Activated B cell treated with CpG ODN at 0.5 μM for 24 hours (primary cell): ENCODE measurements at regions of chr7 and their contacts with region 1.

Region 1: DNA sequence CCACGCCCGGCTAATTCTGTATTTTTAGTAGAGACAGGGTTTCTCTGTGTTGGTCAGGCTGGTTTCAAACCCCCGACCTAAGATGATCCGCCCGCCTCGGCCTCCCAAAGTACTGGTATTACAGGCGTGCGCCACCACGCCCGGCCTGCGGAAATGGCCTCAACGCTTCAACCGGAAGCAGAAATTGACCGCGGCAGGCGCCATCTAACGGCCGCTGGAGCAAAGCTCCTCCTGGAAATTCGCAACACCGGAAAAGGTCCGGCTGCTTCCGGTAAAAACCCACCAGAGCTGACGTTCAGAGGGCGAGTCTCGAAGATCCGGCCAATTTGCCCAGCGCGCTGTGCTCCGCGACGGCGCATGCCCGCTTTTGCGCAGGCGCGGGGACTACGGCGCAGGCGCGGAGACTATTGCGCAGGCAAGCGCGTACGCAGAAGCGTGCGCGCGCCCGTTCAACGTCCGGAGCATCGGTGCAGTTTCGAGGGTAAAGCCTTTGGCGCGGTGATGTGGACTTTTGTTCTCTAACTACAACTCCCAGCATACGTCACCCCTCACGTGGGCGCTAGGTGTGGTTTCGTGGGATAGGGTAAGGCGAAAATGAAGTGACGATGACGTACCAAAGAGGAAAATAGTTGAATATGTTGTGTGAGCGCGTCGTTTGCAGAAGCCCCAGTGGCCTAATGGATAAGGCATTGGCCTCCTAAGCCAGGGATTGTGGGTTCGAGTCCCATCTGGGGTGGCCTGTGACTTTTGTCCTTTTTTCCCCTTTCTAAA is 915 bp upstream of the FMC1 start:
- DNase-seq: peak; percentile 95
- ATAC-seq: peak; percentile 77
- H3K4me3 Mint-ChIP-seq: peak overlapping the region; percentile 96
- H3K27ac Mint-ChIP-seq: peak overlapping the region; percentile 100
- H3K4me1 Mint-ChIP-seq: peaks cover 41% of the 10 kb centered on the region
- H3K27me3 Mint-ChIP-seq: peaks cover 9% of the 10 kb centered on the region
- CTCF ChIP-seq: no peak

Region 2: GRCh38 chr7:138459413-138460175 is 880.6 kb before region 1 on chr7:
- CTCF ChIA-PET with region 1: no interaction called
- POLR2A ChIA-PET with region 1: no interaction called
- intact Hi-C with region 1: loop called (anchors 1 kb)
- DNase-seq: peak; percentile 96
- ATAC-seq: peak; percentile 88
- H3K4me3 Mint-ChIP-seq: peak overlapping the region; percentile 91
- H3K27ac Mint-ChIP-seq: peak overlapping the region; percentile 86
- H3K4me1 Mint-ChIP-seq: peaks cover 22% of the 10 kb centered on the region
- H3K27me3 Mint-ChIP-seq: no peaks in the 10 kb centered on the region
- CTCF ChIP-seq: no peak

Region 3: GRCh38 chr7:139118234-139118804 is 221.9 kb before region 1 on chr7:
- CTCF ChIA-PET with region 1: no interaction called
- POLR2A ChIA-PET with region 1: interaction called, 12 read pairs
- intact Hi-C with region 1: no loop called
- DNase-seq: no peak
- ATAC-seq: peak; percentile 23
- H3K4me3 Mint-ChIP-seq: peak overlapping the region; percentile 68
- H3K27ac Mint-ChIP-seq: peak overlapping the region; percentile 91
- H3K4me1 Mint-ChIP-seq: peaks cover 31% of the 10 kb centered on the region
- H3K27me3 Mint-ChIP-seq: no peaks in the 10 kb centered on the region
- CTCF ChIP-seq: no peak

Region 4: GRCh38 chr7:139230774-139231512 is 109.3 kb before region 1 on chr7 and contains the start of gene UBN2:
- CTCF ChIA-PET with region 1: interaction called, 4 read pairs
- POLR2A ChIA-PET with region 1: interaction called, 5 read pairs
- intact Hi-C with region 1: loop called (anchors 1 kb)
- DNase-seq: peak; percentile 89
- ATAC-seq: peak; percentile 85
- H3K4me3 Mint-ChIP-seq: peak within 1 kb of the TSS; percentile 98
- H3K27ac Mint-ChIP-seq: peak within 1 kb of the TSS; percentile 96
- H3K4me1 Mint-ChIP-seq: peaks cover 20% of the 10 kb centered on the region
- H3K27me3 Mint-ChIP-seq: no peaks in the 10 kb centered on the region
- CTCF ChIP-seq: no peak
- total RNA-seq, gene UBN2: 19.5 and 21.0 TPM in 2 replicates

Region 5: GRCh38 chr7:140062528-140063299 is 722.5 kb after region 1 on chr7 and contains the start of gene PARP12:
- CTCF ChIA-PET with region 1: no interaction called
- POLR2A ChIA-PET with region 1: no interaction called
- intact Hi-C with region 1: loop called (anchors 1 kb)
- DNase-seq: peak; percentile 93
- ATAC-seq: peak; percentile 81
- H3K4me3 Mint-ChIP-seq: peak within 1 kb of the TSS; percentile 97
- H3K27ac Mint-ChIP-seq: peak within 1 kb of the TSS; percentile 98
- H3K4me1 Mint-ChIP-seq: peaks cover 47% of the 10 kb centered on the region
- H3K27me3 Mint-ChIP-seq: no peaks in the 10 kb centered on the region
- CTCF ChIP-seq: no peak
- total RNA-seq, gene PARP12: 104 and 128 TPM in 2 replicates

Region 6: DNA sequence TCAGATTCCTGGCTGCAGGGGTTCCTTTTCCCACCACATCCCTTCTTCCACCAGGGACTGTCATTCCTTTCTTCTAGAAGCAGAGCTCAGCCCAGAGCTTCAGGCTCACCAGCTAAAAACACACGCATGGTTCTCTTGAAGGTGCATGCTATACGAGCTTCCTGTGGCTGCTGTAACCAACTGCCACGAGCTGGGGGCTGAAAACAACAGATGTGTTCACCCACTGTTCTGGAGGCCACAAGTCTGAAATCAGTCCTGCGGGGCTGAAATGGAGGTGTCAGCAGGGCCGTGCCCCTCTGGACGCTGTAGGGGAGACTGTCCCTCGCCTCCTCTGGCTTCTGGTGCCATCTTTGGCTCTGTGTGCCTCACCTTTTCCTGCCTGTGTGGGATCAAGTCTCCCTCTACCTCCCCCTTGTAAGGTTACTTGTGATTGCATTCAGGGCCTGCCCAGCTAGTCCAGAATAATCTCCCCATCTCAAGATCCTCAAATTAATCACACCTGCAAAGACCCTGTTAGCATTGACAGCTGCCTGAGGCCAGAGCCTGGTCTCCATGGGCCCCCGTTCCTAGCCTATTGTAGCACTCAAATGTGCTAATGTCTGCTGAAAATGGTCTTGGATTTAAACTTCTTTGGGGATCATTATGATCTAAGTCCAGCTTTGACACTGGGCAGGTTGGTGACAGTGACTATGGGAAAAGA is 1077.4 kb after region 1 on chr7:
- CTCF ChIA-PET with region 1: no interaction called
- POLR2A ChIA-PET with region 1: no interaction called
- intact Hi-C with region 1: no loop called
- DNase-seq: no peak
- ATAC-seq: no peak
- H3K4me3 Mint-ChIP-seq: no peak overlapping the region
- H3K27ac Mint-ChIP-seq: no peak overlapping the region
- H3K4me1 Mint-ChIP-seq: no peaks in the 10 kb centered on the region
- H3K27me3 Mint-ChIP-seq: no peaks in the 10 kb centered on the region
- CTCF ChIP-seq: no peak

Region 7: DNA sequence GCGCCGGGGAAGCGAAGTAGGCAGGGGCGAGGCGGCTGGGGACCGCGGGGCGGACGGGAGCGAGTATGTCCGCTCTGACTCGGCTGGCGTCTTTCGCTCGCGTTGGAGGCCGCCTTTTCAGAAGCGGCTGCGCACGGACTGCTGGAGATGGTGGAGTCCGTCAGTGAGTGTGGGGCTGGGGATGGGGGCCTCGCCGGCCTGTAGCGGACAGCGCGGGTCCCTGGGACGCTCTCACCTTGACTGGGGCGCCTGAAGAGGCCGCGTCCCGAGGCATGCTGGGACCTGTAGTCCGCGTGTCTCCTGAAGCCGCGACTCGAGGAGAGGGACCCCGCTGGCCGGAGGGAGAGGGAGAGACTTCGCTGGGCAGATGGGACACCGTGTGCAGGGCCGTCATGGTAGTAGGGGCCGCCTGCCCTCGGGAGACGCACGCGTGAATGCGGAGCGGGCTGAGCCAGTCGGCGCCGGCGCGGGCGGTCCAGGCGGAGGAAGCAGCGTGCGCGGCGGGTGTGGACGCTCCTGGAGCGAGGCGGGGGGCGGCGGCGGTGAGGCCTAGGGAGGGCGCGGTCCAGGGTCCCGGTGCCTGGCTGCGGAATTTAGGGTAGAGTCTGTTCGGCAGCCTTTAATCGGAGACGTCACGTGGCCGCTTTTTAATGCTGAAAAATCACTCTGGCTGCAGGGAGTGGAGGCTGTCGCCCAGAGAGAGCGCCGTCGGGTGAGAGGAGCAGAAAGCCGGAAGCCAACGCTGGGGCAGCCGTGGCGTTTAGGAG is 1356.6 kb after region 1 on chr7 and contains the start of gene NDUFB2:
- CTCF ChIA-PET with region 1: no interaction called
- POLR2A ChIA-PET with region 1: no interaction called
- intact Hi-C with region 1: loop called (anchors 2 kb)
- DNase-seq: peak; percentile 90
- ATAC-seq: peak; percentile 86
- H3K4me3 Mint-ChIP-seq: peak within 1 kb of the TSS; percentile 94
- H3K27ac Mint-ChIP-seq: peak within 1 kb of the TSS; percentile 98
- H3K4me1 Mint-ChIP-seq: peaks cover 34% of the 10 kb centered on the region
- H3K27me3 Mint-ChIP-seq: no peaks in the 10 kb centered on the region
- CTCF ChIP-seq: no peak
- total RNA-seq, gene NDUFB2: 140 and 168 TPM in 2 replicates

Region 8: GRCh38 chr7:141014524-141015395 is 1674.5 kb after region 1 on chr7 and contains the start of gene MRPS33:
- CTCF ChIA-PET with region 1: no interaction called
- POLR2A ChIA-PET with region 1: no interaction called
- intact Hi-C with region 1: loop called (anchors 2 kb)
- DNase-seq: peak; percentile 86
- ATAC-seq: peak; percentile 98
- H3K4me3 Mint-ChIP-seq: peak within 1 kb of the TSS; percentile 99
- H3K27ac Mint-ChIP-seq: peak within 1 kb of the TSS; percentile 100
- H3K4me1 Mint-ChIP-seq: peaks cover 20% of the 10 kb centered on the region
- H3K27me3 Mint-ChIP-seq: peaks cover 13% of the 10 kb centered on the region
- CTCF ChIP-seq: no peak
- total RNA-seq, gene MRPS33: 37.5 and 46.4 TPM in 2 replicates